Head of caudate nucleus (tissue), 42 donors: ENCODE measurements at regions of chr22 and their contacts with region 1.

Region 1: DNA sequence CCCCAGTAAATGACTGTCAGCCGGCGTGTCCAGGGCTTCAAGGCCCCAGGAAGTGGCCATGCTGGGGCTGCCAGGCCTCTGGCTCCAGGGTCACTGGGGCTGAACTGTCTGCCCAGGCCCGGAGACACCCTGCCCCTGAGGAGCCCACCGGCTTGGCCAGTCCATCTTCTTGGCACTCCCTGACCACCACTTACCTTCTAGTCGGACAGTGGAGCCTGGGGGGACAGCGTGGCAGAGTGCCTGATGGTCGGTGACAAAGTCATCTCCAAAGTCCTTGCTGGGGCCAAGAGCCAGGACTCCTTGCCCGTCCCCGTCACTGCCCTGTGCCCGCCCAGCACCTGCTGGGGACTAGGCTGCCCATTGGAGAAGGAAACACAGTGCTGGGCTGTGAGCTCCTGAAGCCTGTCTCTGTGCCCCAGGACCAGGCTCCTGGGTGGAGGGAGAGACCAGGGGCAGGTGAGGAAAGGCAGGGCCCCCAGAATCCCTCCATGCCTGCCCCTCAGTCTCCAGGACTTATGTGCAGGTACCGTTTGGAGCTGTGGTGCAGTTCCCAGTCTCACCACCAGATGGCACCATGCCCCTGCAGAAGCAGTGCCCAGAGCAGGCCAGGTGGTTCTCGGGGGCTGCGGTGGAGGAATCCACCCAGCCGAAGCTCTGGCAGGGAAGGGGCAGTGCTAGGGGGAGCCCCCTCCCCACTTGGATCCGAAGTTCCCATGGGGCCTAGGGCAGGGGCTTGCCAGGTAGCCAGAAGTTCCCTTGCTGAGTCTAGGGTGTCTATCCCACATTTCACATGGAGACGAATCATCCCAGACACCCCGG is 6.0 kb upstream of the CCDC188 start:
- DNase-seq: peak; percentile 61 to 97 (median 90)

Region 2: GRCh38 chr22:20268279-20269012 is 111.6 kb after region 1 on chr22 and contains the start of gene RTN4R:
- intact Hi-C with region 1: loop called (anchors 5 kb)
- DNase-seq: peak in 35 of 42 donors; percentile 20 to 81 (median 61)

Region 3: DNA sequence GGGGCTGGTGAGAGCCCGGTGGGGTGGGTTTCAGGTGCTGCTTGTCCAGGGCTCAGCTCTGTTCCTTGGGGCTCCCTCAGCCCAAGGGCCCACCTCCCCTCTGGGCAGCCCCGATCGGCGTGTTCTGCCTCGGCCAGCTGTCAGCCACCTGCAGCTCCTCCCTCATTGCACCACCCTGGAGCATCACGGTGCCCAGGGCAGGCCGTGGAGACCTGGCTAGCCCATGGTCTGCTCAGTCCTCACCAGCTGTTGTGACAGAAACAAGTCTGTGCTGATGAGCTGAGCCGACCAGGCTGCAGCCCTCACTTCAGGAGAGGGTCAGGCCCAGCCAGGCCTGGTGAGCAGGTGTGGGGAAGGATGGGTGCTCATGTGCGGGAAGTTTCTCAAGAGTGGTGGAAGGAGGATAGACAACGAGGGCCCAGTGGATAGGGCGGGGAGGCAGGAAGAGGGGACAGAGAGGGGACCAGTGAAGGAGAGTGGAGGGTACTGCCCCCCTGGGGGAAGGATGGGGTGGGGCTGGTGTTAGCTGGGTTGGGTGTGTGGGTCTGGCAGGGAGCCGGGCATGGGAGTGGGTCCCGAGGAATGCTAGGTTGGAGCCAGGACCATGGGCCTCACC is 127.8 kb after region 1 on chr22:
- intact Hi-C with region 1: loop called (anchors 5 kb)
- DNase-seq: no peak